Motor neuron (in vitro differentiated cells): ENCODE measurements at regions of chr3 and their contacts with region 1.

Region 1: DNA sequence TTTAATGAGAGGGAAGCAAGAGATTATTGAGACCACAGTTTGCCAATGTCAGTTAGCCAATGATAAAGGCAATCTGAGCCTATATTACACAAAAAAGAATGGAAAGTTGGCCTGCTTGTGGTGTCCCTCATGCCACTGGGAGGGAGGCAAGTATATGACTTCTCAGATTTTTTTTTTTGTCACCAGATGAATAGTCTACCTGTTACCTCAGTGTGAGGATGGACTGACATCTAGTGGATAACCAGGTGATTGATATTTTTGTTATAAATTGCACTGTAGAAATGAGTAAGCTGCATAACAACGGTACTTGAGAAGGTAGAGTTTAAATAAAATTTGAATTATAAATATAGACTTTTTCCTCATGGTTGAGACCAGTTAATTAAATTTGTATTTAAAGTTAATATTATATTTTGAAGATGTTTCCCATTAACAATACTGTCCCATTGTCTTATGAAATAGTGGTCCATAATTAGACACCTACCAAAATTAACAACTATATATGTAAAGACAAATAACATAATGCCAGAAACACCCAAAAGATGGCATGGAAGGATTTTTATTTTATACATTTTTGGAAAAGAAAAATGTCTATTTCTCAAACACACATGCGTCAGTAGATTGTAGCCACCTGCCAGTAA is 237.8 kb upstream of the GADL1 start:
- ATAC-seq: peak in 3 of 8 experiments; percentile 53 to 65 (median 63)
- H3K4me3 ChIP-seq: no peak overlapping the region
- H3K27ac ChIP-seq: no peak overlapping the region
- H3K4me1 ChIP-seq: peaks cover 3 to 8% of the 10 kb centered on the region in 2 donors

Region 2: DNA sequence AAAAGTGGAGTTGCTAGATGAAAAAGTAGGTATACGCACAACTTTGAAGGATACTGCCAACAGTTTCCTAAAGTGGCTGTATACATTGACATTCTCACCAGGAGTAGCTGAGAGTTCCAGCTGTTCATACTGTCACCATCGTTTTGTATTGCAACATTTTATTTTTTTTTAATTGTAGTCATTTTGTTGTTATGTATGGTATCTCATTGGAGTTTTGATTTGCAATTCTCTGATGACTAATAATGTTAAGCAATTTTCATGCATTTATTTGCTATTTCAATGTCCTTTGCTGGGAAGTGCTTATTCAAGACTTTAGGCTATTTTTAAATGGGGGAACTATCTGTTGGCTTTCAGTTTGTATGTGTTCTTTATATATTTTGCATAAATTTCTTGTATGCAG is 711.0 kb before region 1 on chr3:
- in situ Hi-C with region 1: no loop called
- ATAC-seq: peak in 3 of 8 experiments; percentile 59 to 96 (median 94)
- H3K4me3 ChIP-seq: no peak overlapping the region
- H3K27ac ChIP-seq: no peak overlapping the region
- H3K4me1 ChIP-seq: no peaks in the 10 kb centered on the region

Region 3: DNA sequence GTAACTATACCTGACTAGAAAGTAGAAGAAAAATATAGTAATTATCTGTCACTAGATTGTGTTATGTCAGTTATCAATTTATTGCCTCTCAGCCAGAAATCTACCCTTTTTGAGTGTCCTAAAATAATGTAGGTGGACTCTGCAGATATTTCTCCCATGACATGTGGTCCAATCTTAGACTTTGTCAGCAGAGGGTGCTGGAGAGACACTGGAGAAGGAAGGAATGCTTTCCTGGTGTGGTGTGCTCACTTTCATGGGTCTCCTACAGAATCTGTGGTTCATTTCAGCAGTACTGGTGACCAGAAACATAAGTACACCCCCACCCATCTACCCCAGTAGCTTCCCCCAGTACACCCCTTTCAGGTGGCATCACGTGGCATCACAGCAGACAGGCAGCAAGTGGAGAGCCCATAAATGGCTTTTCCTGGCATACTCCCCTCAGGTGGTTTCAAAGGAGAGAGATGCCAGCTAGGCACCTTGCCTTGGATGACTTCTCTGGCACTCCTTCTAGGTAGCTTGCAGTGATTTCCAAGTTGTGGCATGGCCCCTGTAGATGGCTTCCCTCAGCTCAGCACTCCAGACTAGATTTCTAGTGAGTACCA is 352.5 kb before region 1 on chr3:
- in situ Hi-C with region 1: loop called in 2 of 9 experiments (anchors 10 to 25 kb)
- ATAC-seq: peak in 3 of 8 experiments; percentile 81 to 93 (median 88)
- H3K4me3 ChIP-seq: no peak overlapping the region
- H3K27ac ChIP-seq: no peak overlapping the region
- H3K4me1 ChIP-seq: peaks cover 3 to 7% of the 10 kb centered on the region in 2 donors

Region 4: DNA sequence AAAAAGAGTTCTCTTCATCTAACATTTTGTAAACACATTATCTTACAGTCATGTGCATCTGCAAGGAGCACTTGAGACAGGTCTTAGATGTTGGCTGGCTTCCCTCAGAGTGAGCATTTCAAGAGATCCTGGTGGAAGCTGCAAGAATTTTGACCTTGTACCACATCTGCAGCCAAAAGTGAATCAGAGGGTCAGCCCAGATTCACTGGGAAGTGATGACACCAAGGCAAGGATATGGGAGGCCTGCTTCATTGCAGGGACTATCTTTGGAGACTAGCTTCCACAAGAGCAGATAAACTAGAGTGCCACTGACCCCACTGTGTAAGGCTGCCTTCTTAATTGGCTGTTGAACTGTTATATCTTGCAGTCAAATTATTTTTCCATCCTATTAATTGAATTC is 216.5 kb before region 1 on chr3:
- in situ Hi-C with region 1: no loop called
- ATAC-seq: peak in 1 of 8 experiments; percentile 6
- H3K4me3 ChIP-seq: no peak overlapping the region
- H3K27ac ChIP-seq: no peak overlapping the region
- H3K4me1 ChIP-seq: peaks cover 0 to 3% of the 10 kb centered on the region in 2 donors

Region 5: DNA sequence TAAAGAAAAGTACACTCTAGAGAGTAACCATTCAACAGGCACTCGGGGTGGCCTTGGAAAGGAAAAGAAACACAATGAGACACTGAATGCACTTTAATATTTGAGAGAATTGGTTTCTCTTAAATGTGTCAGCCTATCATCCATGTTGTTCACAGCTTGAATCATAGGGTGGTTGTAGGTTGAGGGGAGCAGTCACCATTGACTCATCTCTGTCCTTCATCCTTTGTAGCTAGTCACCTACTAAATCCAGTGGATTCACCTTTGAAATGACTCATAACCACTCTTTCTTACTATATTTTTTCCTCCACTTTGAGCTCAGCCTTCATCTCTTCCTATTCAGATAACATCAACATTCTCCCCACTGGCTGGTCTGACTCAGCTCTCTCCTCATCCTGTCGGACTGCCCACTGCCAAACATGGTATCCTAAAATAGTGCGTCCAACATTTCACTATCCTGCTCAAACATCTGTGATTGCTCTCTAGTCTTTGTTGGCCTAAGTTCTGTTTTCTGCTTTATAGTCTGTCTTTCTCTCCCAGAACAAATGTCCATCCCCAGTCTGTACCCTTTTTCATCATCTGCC is 55.1 kb before region 1 on chr3:
- in situ Hi-C with region 1: no loop called
- ATAC-seq: peak in 3 of 8 experiments; percentile 61 to 78 (median 67)
- H3K4me3 ChIP-seq: no peak overlapping the region
- H3K27ac ChIP-seq: no peak overlapping the region
- H3K4me1 ChIP-seq: peaks cover 4 to 12% of the 10 kb centered on the region in 2 donors